Heart left ventricle (tissue), 16 donors: ENCODE measurements at regions of chr3 and their contacts with region 1.

Region 1: GRCh38 chr3:122988508-122988907 is 39.1 kb downstream of the SEMA5B start:
- DNase-seq: peak in 3 of 5 donors; percentile 39 to 75 (median 56)
- ATAC-seq: peak in 2 of 4 donors; percentile 40 to 62
- H3K4me3 ChIP-seq: no peak overlapping the region
- H3K27ac ChIP-seq: no peak overlapping the region
- H3K4me1 ChIP-seq: peaks cover 0 to 51% (median 24%) of the 10 kb centered on the region in 12 donors
- H3K27me3 ChIP-seq: peaks cover 0 to 4% (median 0%) of the 10 kb centered on the region in 9 donors
- CTCF ChIP-seq: no peak
- POLR2A ChIP-seq: no peak

Region 2: GRCh38 chr3:123021996-123022510 is 33.5 kb after region 1 on chr3:
- intact Hi-C with region 1: loop called in 1 of 10 experiments (anchors 5 kb)
- DNase-seq: no peak
- ATAC-seq: no peak
- H3K4me3 ChIP-seq: no peak overlapping the region
- H3K27ac ChIP-seq: no peak overlapping the region
- H3K4me1 ChIP-seq: peaks cover 0 to 25% (median 12%) of the 10 kb centered on the region in 12 donors
- H3K27me3 ChIP-seq: peaks cover 0 to 32% (median 5%) of the 10 kb centered on the region in 9 donors
- CTCF ChIP-seq: no peak
- POLR2A ChIP-seq: no peak

Region 3: DNA sequence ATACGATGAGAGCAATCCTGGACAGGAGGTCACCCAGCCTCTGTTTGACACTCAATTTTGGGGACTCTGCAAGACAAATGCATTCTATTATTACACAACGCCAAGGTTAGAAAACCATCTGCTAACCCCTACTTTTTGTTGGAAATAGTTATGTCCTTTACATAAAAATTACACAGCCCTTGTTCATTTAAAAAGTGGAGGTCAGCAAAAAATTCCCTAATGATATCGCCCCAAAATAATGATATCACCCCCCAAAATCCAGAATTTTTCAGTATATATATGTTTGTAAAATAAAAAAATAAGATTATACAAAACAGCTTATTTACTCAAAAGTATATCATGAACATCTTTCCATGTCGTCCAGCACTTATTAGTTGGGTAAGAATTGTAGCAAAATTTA is 992.0 kb after region 1 on chr3:
- intact Hi-C with region 1: no loop called
- DNase-seq: no peak
- ATAC-seq: no peak
- H3K4me3 ChIP-seq: peak overlapping the region in 2 of 12 donors; percentile 30 to 44
- H3K27ac ChIP-seq: no peak overlapping the region
- H3K4me1 ChIP-seq: peaks cover 0 to 13% (median 2%) of the 10 kb centered on the region in 12 donors
- H3K27me3 ChIP-seq: peaks cover 0 to 23% (median 3%) of the 10 kb centered on the region in 9 donors
- CTCF ChIP-seq: no peak
- POLR2A ChIP-seq: no peak